T-cell (primary cell): ENCODE measurements at regions of chr17 and their contacts with region 1.

Region 1: DNA sequence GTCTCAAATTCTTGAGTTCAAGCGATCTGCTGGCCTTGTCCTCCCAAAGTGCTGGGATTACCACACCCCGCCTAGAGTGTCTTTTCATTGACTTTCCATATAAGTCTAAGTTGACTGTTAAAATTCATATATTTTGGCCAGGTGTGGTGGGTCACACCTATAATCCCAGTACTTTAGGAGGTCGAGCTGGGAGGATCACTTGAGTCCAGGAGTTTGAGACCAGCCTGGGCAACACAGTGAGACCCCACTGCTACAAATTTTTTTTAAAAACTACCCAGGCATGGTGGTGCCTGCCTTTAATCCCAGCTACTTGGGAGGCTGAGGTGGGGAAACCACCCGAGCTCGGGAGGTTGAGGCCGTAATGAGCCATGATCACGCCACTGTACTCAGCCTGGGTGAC is 21.9 kb upstream of the MRC2 start:
- DNase-seq: no peak
- ATAC-seq: no peak
- H3K4me3 ChIP-seq: no peak overlapping the region
- H3K4me3 Mint-ChIP-seq: no peak overlapping the region
- H3K27ac ChIP-seq: no peak overlapping the region
- H3K27ac Mint-ChIP-seq: no peak overlapping the region
- H3K4me1 ChIP-seq: no peaks in the 10 kb centered on the region
- H3K4me1 Mint-ChIP-seq: peaks cover 0 to 6% (median 0%) of the 10 kb centered on the region in 3 donors
- H3K27me3 ChIP-seq: no peaks in the 10 kb centered on the region
- H3K27me3 Mint-ChIP-seq: no peaks in the 10 kb centered on the region

Region 2: GRCh38 chr17:62562656-62563055 is 42.9 kb before region 1 on chr17:
- CTCF ChIA-PET with region 1: no interaction called
- POLR2A ChIA-PET with region 1: no interaction called
- DNase-seq: no peak
- ATAC-seq: no peak
- H3K4me3 ChIP-seq: no peak overlapping the region
- H3K4me3 Mint-ChIP-seq: no peak overlapping the region
- H3K27ac ChIP-seq: no peak overlapping the region
- H3K27ac Mint-ChIP-seq: no peak overlapping the region
- H3K4me1 ChIP-seq: no peaks in the 10 kb centered on the region
- H3K4me1 Mint-ChIP-seq: peaks cover 2 to 15% (median 4%) of the 10 kb centered on the region in 3 donors
- H3K27me3 ChIP-seq: no peaks in the 10 kb centered on the region
- H3K27me3 Mint-ChIP-seq: no peaks in the 10 kb centered on the region

Region 3: GRCh38 chr17:62703775-62704378 is 98.3 kb after region 1 on chr17:
- CTCF ChIA-PET with region 1: no interaction called
- POLR2A ChIA-PET with region 1: interaction called in 1 of 2 experiments, 10 read pairs
- DNase-seq: peak in 34 of 35 experiments; percentile 18 to 81 (median 55)
- ATAC-seq: peak; percentile 92 to 97 (median 95)
- H3K4me3 ChIP-seq: peak overlapping the region; percentile 44 to 71
- H3K4me3 Mint-ChIP-seq: peak overlapping the region; percentile 47 to 67 (median 58)
- H3K27ac ChIP-seq: no peak overlapping the region
- H3K27ac Mint-ChIP-seq: no peak overlapping the region
- H3K4me1 ChIP-seq: peaks cover 0 to 15% of the 10 kb centered on the region in 2 experiments
- H3K4me1 Mint-ChIP-seq: peaks cover 0 to 4% (median 3%) of the 10 kb centered on the region in 3 donors
- H3K27me3 ChIP-seq: peaks cover 2 to 36% of the 10 kb centered on the region in 2 experiments
- H3K27me3 Mint-ChIP-seq: peaks cover 0 to 4% of the 10 kb centered on the region in 2 donors